ENCODE measurements at regions of chr1 and their contacts with region 1.

Region 1: GRCh38 chr1:243786265-243786931 is 63.6 kb downstream of the AKT3 start:
- DNase-seq: no peak
- ATAC-seq: no peak
- H3K4me3 ChIP-seq: no peak overlapping the region
- H3K4me3 Mint-ChIP-seq: no peak overlapping the region
- H3K27ac ChIP-seq: no peak overlapping the region
- H3K27ac Mint-ChIP-seq: no peak overlapping the region
- H3K4me1 ChIP-seq: no peaks in the 10 kb centered on the region
- H3K4me1 Mint-ChIP-seq: peaks cover 57 to 62% (median 60%) of the 10 kb centered on the region in 3 donors
- H3K27me3 ChIP-seq: no peaks in the 10 kb centered on the region
- H3K27me3 Mint-ChIP-seq: no peaks in the 10 kb centered on the region

Region 2: GRCh38 chr1:243763806-243764205 is 22.6 kb before region 1 on chr1:
- CTCF ChIA-PET with region 1: interaction called in 1 of 2 experiments, 14 read pairs
- POLR2A ChIA-PET with region 1: no interaction called
- DNase-seq: no peak
- ATAC-seq: no peak
- H3K4me3 ChIP-seq: no peak overlapping the region
- H3K4me3 Mint-ChIP-seq: no peak overlapping the region
- H3K27ac ChIP-seq: no peak overlapping the region
- H3K27ac Mint-ChIP-seq: no peak overlapping the region
- H3K4me1 ChIP-seq: peaks cover 0 to 3% of the 10 kb centered on the region in 2 experiments
- H3K4me1 Mint-ChIP-seq: peaks cover 37 to 55% (median 53%) of the 10 kb centered on the region in 3 donors
- H3K27me3 ChIP-seq: no peaks in the 10 kb centered on the region
- H3K27me3 Mint-ChIP-seq: no peaks in the 10 kb centered on the region

Measured in T-cell (primary cell).